AG04449 (cell line): ENCODE measurements at regions of chr9 and their contacts with region 1.

Region 1: GRCh38 chr9:71716138-71716909 is 52.0 kb downstream of the CEMIP2 start:
- DNase-seq: no peak
- H3K4me3 ChIP-seq: no peak overlapping the region
- CTCF ChIP-seq: no peak

Region 2: DNA sequence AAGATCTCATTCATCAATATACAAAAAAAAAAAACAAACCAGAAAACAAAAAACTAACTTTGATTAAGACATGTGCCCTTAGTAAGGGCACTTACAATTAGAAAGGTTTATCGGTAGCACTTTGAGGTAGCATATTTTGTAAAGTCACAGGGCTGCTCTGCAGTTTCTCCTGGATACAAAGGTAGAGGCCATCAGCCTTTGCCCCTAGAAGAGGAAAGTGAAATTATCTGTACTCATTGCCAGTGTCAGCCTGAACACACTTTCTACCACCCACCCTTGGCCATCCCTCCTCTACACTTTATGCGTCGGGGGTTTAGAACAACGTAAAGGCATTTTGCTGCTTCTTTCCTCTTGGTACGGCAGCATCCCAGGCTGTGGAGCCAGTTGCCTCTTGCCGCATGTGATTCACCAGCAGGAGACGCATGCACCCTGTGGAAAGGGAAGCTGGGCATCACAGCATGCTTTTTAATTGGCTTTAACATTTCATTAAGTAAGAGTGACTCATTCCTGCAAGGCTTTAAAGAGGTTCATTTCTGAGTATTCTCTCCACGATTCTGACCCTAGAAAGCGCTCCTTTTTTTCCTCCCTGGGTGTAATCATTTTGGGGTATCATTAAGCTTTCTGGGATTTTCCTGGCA is 32.6 kb before region 1 on chr9:
- CTCF ChIA-PET with region 1: interaction called, 24 read pairs
- POLR2A ChIA-PET with region 1: no interaction called
- DNase-seq: no peak
- H3K4me3 ChIP-seq: no peak overlapping the region
- CTCF ChIP-seq: peak; percentile 64

Region 3: GRCh38 chr9:71692337-71692736 is 24.0 kb before region 1 on chr9:
- CTCF ChIA-PET with region 1: interaction called, 24 read pairs
- POLR2A ChIA-PET with region 1: no interaction called
- DNase-seq: no peak
- H3K4me3 ChIP-seq: no peak overlapping the region
- CTCF ChIP-seq: no peak

Region 4: GRCh38 chr9:71704796-71705195 is 11.5 kb before region 1 on chr9:
- CTCF ChIA-PET with region 1: interaction called, 12 read pairs
- POLR2A ChIA-PET with region 1: interaction called, 3 read pairs
- DNase-seq: no peak
- H3K4me3 ChIP-seq: no peak overlapping the region
- CTCF ChIP-seq: no peak

Region 5: GRCh38 chr9:71726723-71727122 is 10.4 kb after region 1 on chr9:
- CTCF ChIA-PET with region 1: interaction called, 11 read pairs
- POLR2A ChIA-PET with region 1: no interaction called
- DNase-seq: no peak
- H3K4me3 ChIP-seq: no peak overlapping the region
- CTCF ChIP-seq: no peak